ENCODE measurements at regions of chr10 and their contacts with region 1.

Region 1: DNA sequence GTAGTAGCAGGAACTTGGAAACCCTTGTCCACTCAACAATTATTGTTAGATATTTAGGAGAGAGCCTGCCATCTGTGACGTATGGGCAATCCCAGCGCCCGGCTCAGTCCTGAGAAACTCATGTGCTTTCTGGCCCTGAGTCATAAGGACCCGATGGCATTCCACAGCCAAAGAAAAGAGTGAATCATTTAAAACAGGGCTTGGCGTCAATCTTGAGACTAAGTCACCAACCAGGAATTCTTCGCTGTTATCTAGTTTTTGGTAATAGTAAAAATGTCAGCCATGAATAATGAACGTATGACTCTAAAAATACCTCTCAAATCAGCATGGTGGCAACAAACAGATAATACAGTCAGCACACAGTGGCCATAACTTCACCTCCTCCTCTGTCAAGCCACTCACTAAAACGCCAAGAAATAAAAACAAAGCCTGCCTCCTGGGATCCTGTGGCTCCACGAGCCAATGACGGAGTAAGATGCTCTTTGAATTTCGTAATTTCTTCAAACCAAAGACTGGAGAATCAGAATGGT is 140.8 kb downstream of the ADAM12 start:
- DNase-seq: peak; percentile 91 to 93
- ATAC-seq: peak; percentile 91
- H3K4me3 ChIP-seq: no peak overlapping the region
- H3K27ac ChIP-seq: peak overlapping the region in 1 of 2 donors; percentile 93
- H3K4me1 ChIP-seq: peaks cover 0 to 4% of the 10 kb centered on the region in 2 donors
- H3K27me3 ChIP-seq: no peaks in the 10 kb centered on the region

Region 2: GRCh38 chr10:126062131-126062981 is 185.2 kb before region 1 on chr10:
- intact Hi-C with region 1: loop called in 1 of 2 experiments (anchors 5 kb)
- DNase-seq: peak; percentile 96 to 97
- ATAC-seq: peak; percentile 87
- H3K4me3 ChIP-seq: no peak overlapping the region
- H3K27ac ChIP-seq: peak overlapping the region in 1 of 2 donors; percentile 82
- H3K4me1 ChIP-seq: peaks cover 0 to 3% of the 10 kb centered on the region in 2 donors
- H3K27me3 ChIP-seq: no peaks in the 10 kb centered on the region

Region 3: GRCh38 chr10:126171553-126171952 is 76.0 kb before region 1 on chr10:
- intact Hi-C with region 1: no loop called
- DNase-seq: no peak
- ATAC-seq: no peak
- H3K4me3 ChIP-seq: no peak overlapping the region
- H3K27ac ChIP-seq: no peak overlapping the region
- H3K4me1 ChIP-seq: no peaks in the 10 kb centered on the region
- H3K27me3 ChIP-seq: no peaks in the 10 kb centered on the region

Region 4: GRCh38 chr10:126199221-126199998 is 48.1 kb before region 1 on chr10:
- intact Hi-C with region 1: loop called in 1 of 2 experiments (anchors 1 kb)
- DNase-seq: peak in 1 of 2 donors; percentile 62
- ATAC-seq: no peak
- H3K4me3 ChIP-seq: no peak overlapping the region
- H3K27ac ChIP-seq: no peak overlapping the region
- H3K4me1 ChIP-seq: peaks cover 3 to 4% of the 10 kb centered on the region in 2 donors
- H3K27me3 ChIP-seq: no peaks in the 10 kb centered on the region